ENCODE measurements at regions of chr21 and their contacts with region 1.

Region 1: GRCh38 chr21:29298348-29299045 is at the start of gene BACH1:
- DNase-seq: peak; percentile 87
- H3K4me3 Mint-ChIP-seq: peak within 1 kb of the TSS; percentile 82
- H3K27ac Mint-ChIP-seq: peak within 1 kb of the TSS; percentile 77
- H3K4me1 Mint-ChIP-seq: peaks cover 44% of the 10 kb centered on the region
- H3K27me3 Mint-ChIP-seq: peaks cover 12% of the 10 kb centered on the region
- total RNA-seq, gene BACH1: 21.6 to 26.2 TPM

Region 2: GRCh38 chr21:29073222-29074006 is 225.1 kb before region 1 on chr21 and contains the start of gene CCT8:
- CTCF ChIA-PET with region 1: interaction called, 6 read pairs
- POLR2A ChIA-PET with region 1: interaction called, 69 read pairs
- DNase-seq: peak; percentile 99
- H3K4me3 Mint-ChIP-seq: peak within 1 kb of the TSS; percentile 97
- H3K27ac Mint-ChIP-seq: peak within 1 kb of the TSS; percentile 93
- H3K4me1 Mint-ChIP-seq: peaks cover 59% of the 10 kb centered on the region
- H3K27me3 Mint-ChIP-seq: no peaks in the 10 kb centered on the region
- total RNA-seq, gene CCT8: 214 to 216 TPM

Region 3: GRCh38 chr21:29091032-29091431 is 207.5 kb before region 1 on chr21:
- CTCF ChIA-PET with region 1: interaction called, 15 read pairs
- POLR2A ChIA-PET with region 1: interaction called, 3 read pairs
- DNase-seq: no peak
- H3K4me3 Mint-ChIP-seq: no peak overlapping the region
- H3K27ac Mint-ChIP-seq: no peak overlapping the region
- H3K4me1 Mint-ChIP-seq: peaks cover 17% of the 10 kb centered on the region
- H3K27me3 Mint-ChIP-seq: peaks cover 3% of the 10 kb centered on the region

Region 4: GRCh38 chr21:29232601-29233546 is 65.6 kb before region 1 on chr21:
- CTCF ChIA-PET with region 1: no interaction called
- POLR2A ChIA-PET with region 1: no interaction called
- DNase-seq: no peak
- H3K4me3 Mint-ChIP-seq: no peak overlapping the region
- H3K27ac Mint-ChIP-seq: no peak overlapping the region
- H3K4me1 Mint-ChIP-seq: peaks cover 35% of the 10 kb centered on the region
- H3K27me3 Mint-ChIP-seq: peaks cover 43% of the 10 kb centered on the region

Region 5: DNA sequence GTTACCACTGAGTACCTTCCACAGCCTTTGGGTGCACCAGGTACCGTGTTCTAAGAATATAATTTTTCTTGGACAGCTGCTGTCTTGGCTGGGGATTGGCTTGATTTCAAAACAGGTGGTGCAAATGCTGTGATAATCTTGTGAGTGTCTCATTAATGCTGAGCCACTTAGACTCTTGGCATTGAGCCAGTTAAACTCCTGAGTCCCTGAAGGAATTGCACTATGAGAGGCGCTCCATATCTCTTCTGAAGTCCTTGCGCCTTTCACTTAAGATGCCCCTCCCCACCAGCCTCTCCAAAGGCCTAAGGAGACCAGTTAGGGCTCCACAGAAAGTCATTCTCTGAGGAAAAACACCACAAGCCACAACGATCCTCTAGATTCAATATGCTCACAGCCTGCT is 51.2 kb after region 1 on chr21:
- CTCF ChIA-PET with region 1: interaction called, 12 read pairs
- POLR2A ChIA-PET with region 1: interaction called, 8 read pairs
- DNase-seq: no peak
- H3K4me3 Mint-ChIP-seq: no peak overlapping the region
- H3K27ac Mint-ChIP-seq: no peak overlapping the region
- H3K4me1 Mint-ChIP-seq: peaks cover 20% of the 10 kb centered on the region
- H3K27me3 Mint-ChIP-seq: no peaks in the 10 kb centered on the region